Mammary epithelial cell (primary cell): ENCODE measurements at regions of chr1 and their contacts with region 1.

Region 1: DNA sequence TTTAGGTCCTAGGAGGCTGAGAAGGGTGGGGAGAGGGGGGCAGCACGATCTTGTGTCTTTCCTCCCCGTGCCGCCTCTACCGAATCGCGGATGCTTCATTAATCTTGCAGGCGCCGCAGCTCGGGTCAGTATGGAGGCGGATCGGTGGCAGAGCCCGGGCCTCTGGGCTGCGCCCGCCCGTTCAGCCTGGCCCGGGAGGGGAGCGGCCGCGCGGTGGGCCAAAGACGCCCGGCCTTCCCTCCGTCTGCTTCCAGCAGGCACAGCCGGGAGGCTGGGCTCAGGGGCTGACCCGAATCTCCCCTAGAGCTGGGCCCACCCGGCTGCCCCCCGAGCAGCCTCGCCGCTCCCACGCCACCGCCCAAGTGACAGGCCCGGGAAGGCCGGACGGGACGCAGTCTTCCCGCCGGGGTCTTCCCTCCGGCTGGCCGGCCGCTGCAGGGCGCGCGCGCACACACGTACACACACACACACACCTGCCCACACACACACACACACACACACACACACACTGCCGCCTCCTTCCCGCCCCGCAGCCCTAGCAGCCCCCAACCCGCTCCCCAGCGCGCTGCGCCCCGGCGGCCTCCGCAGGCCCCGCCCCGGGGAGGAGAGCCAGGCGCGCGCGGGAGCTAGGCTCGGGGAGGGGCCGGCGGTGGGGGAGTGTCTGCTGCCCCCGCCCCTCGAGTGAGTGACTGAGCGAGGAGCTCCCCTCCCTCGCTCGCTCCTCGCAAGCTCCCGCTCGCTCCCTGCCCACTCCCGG is at the start of gene C1orf21:
- DNase-seq: peak; percentile 89
- H3K4me3 ChIP-seq: peak within 1 kb of the TSS; percentile 66 to 87 (median 78)
- H3K27ac ChIP-seq: peak within 1 kb of the TSS; percentile 85
- H3K4me1 ChIP-seq: peaks cover 35% of the 10 kb centered on the region
- H3K27me3 ChIP-seq: no peaks in the 10 kb centered on the region
- CTCF ChIP-seq: no peak
- total RNA-seq, gene C1orf21: 34.8 to 37.2 TPM

Region 2: GRCh38 chr1:184075055-184076029 is 311.1 kb before region 1 on chr1:
- CTCF ChIA-PET with region 1: no interaction called
- dilution Hi-C with region 1: no loop called
- in situ Hi-C with region 1: no loop called
- intact Hi-C with region 1: loop called (anchors 5 kb)
- DNase-seq: peak; percentile 51
- H3K4me3 ChIP-seq: no peak overlapping the region
- H3K27ac ChIP-seq: no peak overlapping the region
- H3K4me1 ChIP-seq: no peaks in the 10 kb centered on the region
- H3K27me3 ChIP-seq: no peaks in the 10 kb centered on the region
- CTCF ChIP-seq: peak; percentile 70 to 72

Region 3: GRCh38 chr1:184425449-184426218 is 39.1 kb after region 1 on chr1:
- CTCF ChIA-PET with region 1: no interaction called
- dilution Hi-C with region 1: no loop called
- in situ Hi-C with region 1: no loop called
- intact Hi-C with region 1: loop called (anchors 2 kb)
- DNase-seq: no peak
- H3K4me3 ChIP-seq: no peak overlapping the region
- H3K27ac ChIP-seq: no peak overlapping the region
- H3K4me1 ChIP-seq: peaks cover 19% of the 10 kb centered on the region
- H3K27me3 ChIP-seq: no peaks in the 10 kb centered on the region
- CTCF ChIP-seq: no peak

Region 4: GRCh38 chr1:184555665-184556641 is 169.5 kb after region 1 on chr1:
- CTCF ChIA-PET with region 1: no interaction called
- dilution Hi-C with region 1: no loop called
- in situ Hi-C with region 1: loop called in 1 of 2 experiments (anchors 10 kb)
- intact Hi-C with region 1: loop called (anchors 1 kb)
- DNase-seq: peak; percentile 77
- H3K4me3 ChIP-seq: no peak overlapping the region
- H3K27ac ChIP-seq: peak overlapping the region; percentile 52
- H3K4me1 ChIP-seq: peaks cover 26% of the 10 kb centered on the region
- H3K27me3 ChIP-seq: no peaks in the 10 kb centered on the region
- CTCF ChIP-seq: peak in 1 of 2 donors; percentile 7

Region 5: GRCh38 chr1:184622136-184622823 is 235.8 kb after region 1 on chr1:
- CTCF ChIA-PET with region 1: no interaction called
- dilution Hi-C with region 1: no loop called
- in situ Hi-C with region 1: no loop called
- intact Hi-C with region 1: loop called (anchors 5 kb)
- DNase-seq: peak; percentile 77
- H3K4me3 ChIP-seq: no peak overlapping the region
- H3K27ac ChIP-seq: no peak overlapping the region
- H3K4me1 ChIP-seq: peaks cover 22% of the 10 kb centered on the region
- H3K27me3 ChIP-seq: no peaks in the 10 kb centered on the region
- CTCF ChIP-seq: no peak